Calu3 (cell line): ENCODE measurements at regions of chr4 and their contacts with region 1.

Region 1: DNA sequence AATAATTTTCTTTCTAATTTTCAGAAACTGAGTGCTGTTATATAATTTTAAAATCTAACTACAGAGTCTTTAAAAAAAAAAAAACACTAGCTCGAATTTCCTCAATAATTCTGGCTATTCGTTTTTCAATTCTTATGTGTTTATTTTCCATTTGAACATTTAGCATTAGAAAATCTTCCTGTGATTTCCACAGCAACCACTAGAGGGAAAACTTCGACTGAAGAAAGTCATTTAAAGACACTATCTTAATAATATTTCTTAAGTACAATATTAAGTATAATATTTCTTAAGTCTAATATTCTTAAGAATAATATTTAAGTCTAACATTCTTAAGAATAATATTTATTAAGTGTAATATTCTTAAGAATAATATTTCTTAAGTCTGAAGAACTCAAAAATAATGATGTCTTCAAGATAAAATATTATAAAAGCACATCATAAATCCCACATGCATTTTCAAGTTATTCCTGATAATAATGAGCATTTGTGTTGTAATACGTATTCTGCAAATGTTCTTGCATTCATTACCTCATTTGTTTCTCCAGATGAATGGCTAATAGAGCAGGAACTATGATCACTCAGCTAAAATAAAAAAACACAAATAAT is 118.4 kb upstream of the WDR17 start:
- DNase-seq: no peak
- H3K4me3 Mint-ChIP-seq: no peak overlapping the region
- H3K27ac Mint-ChIP-seq: no peak overlapping the region
- H3K4me1 Mint-ChIP-seq: peaks cover 8% of the 10 kb centered on the region
- H3K27me3 Mint-ChIP-seq: no peaks in the 10 kb centered on the region
- CTCF ChIP-seq: peak; percentile 22

Region 2: DNA sequence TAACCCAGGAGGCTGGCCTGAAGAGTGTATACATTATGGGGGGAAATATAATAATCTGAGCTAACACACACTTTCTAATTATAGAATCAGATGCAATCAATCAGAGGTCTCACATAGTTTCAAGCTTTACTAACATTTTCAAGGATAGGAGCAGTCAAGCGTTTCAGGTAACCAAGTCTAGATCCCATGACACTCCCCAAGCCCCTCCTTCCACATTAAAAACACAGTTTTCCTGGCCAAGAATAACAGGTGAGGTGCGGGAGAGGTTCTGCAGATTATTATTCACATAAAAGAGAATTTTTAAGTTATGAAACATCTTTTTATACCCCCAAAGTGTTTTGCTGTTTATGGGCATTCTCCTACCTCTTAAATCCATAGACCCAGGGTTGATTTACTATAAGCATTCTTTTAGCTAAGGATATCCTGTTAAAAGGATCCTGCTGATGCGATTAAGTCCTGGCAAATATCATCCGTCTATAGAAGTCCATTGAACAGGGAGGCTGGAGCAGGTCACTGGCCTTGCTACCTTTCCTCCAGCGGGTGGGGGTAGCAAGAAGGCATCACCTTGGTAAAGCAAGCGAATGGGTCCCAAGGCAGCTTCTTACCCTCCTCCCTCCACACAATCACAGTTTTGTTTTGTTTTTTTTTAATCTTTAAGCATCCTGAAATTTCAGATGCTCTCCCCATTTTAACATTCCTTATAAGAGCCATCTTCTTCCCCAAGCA is 30.4 kb before region 1 on chr4:
- CTCF ChIA-PET with region 1: no interaction called
- intact Hi-C with region 1: no loop called
- DNase-seq: no peak
- H3K4me3 Mint-ChIP-seq: no peak overlapping the region
- H3K27ac Mint-ChIP-seq: no peak overlapping the region
- H3K4me1 Mint-ChIP-seq: no peaks in the 10 kb centered on the region
- H3K27me3 Mint-ChIP-seq: no peaks in the 10 kb centered on the region
- CTCF ChIP-seq: no peak

Region 3: DNA sequence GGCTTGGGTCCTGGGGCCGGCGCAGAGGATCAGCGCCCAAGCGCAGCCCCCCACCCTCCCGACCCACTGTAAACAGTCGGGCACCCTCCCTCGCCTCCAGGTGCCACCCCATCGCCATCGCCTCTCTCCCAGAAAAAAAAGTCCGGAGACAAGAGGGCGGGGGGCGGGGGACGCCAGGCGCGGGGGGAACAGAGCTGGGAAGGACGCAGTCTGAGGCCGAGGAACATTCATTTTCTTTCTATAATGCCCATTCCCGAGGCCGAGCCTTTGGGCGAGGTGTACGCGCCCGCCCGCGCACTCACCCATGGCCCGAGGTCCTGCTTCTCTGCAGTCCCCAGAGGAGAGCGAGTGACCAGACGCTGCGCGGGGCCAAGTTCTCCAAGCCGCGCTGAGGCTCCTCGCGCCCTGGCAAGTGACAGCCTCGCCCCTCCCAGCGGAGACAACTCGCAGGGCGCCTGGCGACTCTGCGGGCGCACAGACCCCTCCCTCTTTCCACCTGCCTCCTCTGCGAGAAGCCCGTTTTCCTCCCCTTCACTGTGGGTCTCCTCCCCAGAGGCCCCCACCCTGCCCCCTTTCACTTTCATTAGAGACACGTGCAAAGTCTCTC is 54.9 kb after region 1 on chr4:
- CTCF ChIA-PET with region 1: no interaction called
- intact Hi-C with region 1: loop called (anchors 5 kb)
- DNase-seq: peak; percentile 53
- H3K4me3 Mint-ChIP-seq: peak overlapping the region; percentile 83
- H3K27ac Mint-ChIP-seq: peak overlapping the region; percentile 36
- H3K4me1 Mint-ChIP-seq: peaks cover 20% of the 10 kb centered on the region
- H3K27me3 Mint-ChIP-seq: no peaks in the 10 kb centered on the region
- CTCF ChIP-seq: no peak

Region 4: DNA sequence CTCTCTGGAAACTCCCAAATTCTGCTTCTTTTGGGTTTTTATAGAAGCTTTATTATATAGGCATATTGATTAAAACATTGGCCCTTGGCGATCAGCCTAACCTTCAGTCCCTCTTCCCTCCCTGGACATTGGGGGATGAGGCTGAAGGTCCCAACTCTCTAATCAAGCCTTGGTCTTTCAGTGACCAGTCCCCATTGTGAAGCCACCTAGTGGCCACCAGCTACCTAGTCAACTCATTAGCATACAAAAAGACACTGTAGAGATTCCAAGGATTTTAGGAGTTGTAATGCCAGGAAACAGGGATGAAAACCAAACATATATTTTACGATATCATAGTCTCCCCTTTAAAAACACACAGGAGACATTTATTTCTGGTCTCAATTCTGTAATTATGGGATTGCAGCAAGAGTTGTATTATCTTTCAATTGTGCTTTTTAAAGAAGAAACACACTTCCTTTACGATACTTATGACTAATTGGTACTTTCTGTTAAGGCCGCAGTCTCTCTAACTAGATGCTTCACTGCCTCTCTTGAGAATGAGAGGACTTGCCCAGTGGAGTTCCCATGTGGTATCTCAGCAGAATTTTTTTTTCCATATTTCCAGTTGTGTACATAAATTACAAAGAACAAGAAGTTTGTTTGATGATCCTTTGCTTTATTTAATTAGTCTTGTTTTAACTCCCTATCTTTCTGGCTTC is 176.6 kb after region 1 on chr4:
- CTCF ChIA-PET with region 1: no interaction called
- intact Hi-C with region 1: loop called (anchors 2 kb)
- DNase-seq: peak; percentile 9
- H3K4me3 Mint-ChIP-seq: no peak overlapping the region
- H3K27ac Mint-ChIP-seq: no peak overlapping the region
- H3K4me1 Mint-ChIP-seq: no peaks in the 10 kb centered on the region
- H3K27me3 Mint-ChIP-seq: no peaks in the 10 kb centered on the region
- CTCF ChIP-seq: peak; percentile 36